GM23248 (cell line): ENCODE measurements at regions of chr9 and their contacts with region 1.

Region 1: GRCh38 chr9:74528207-74528606 is 31.1 kb downstream of the RORB start:
- DNase-seq: no peak
- H3K4me3 ChIP-seq: no peak overlapping the region
- H3K27ac ChIP-seq: no peak overlapping the region
- H3K4me1 ChIP-seq: no peaks in the 10 kb centered on the region
- H3K27me3 ChIP-seq: no peaks in the 10 kb centered on the region

Region 2: DNA sequence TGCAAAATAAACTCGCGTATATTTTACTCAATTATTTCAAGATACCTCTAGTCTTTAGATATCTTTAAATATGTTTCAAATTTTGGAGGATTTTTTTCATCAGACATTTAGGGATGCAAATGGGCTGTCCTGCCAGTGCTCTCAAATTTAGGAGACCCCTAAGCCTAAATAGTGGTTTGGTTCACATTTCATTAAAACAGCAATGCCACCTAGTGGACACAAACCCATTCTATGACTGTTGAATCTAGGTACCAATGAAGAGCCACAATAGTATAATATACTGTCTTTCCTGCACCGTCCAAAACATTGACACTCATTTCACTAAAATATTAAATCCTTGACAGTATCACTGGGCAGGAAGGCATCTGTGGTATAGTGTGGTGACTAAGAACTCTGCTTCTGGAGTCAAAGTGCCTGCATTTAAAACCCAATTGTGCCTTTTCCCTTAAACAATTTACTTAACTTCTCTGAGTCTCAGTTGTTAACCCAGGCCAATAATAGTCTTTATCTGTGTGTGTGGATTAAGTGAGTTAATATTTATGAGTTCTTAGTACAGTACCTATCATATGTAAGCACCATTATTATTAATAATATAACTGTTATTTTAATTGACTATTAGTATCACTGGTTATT is 116.9 kb after region 1 on chr9:
- in situ Hi-C with region 1: loop called (anchors 25 kb)
- DNase-seq: peak; percentile 24
- H3K4me3 ChIP-seq: no peak overlapping the region
- H3K27ac ChIP-seq: no peak overlapping the region
- H3K4me1 ChIP-seq: no peaks in the 10 kb centered on the region
- H3K27me3 ChIP-seq: peaks cover 7% of the 10 kb centered on the region; the same call in 1 of the 2 replicates